ENCODE measurements at regions of chr17 and their contacts with region 1.

Region 1: DNA sequence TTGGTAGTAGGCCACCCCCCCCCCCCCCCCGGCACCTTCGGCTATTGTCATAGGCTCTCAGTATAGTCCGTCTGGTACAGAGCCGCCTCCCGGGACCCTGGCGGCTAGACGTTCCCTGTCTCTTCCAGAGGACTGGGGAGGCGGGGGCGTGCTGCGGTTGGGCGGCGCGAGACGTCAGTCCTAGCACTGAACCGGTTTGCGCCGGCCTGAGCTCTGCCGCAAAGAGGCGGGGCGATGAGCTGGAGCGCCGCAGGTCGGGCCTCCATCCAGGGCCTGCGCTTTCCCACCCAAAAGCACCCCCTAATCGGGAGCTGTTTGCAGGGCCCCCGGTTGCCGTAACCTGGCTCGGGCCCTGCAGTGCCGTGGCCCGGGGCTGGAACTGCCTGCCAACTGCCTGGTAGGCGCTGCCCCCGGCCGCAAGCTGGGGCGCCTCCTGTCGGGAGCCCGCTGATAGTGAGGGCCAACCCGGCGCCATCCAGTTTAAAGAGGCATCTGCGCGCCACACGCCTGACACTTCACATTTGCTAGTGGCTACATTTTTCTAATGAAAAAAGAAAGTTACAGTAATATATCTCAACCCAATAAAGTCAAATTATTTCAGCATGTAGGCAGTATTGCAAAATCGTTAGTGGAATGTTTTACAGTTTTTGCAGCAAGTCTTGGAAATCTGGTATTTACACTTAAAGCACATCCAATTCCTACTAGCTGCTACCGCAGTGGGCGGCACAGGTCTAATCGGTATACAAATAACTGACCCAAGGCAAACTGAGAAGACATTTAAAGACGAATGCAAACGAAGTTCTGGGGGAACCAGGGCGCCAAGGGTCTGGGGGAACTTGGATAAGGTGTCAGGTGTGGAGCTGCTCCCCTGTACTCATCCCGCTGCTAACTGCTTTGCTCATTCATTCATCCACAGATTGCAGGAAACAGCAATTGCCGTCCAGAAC is 748 bp upstream of the USP22 start:
- DNase-seq: peak; percentile 90 to 99 (median 95)
- ATAC-seq: peak; percentile 77
- H3K4me3 ChIP-seq: peak overlapping the region; percentile 55 to 66
- H3K4me3 Mint-ChIP-seq: peak overlapping the region; percentile 78
- H3K27ac ChIP-seq: peak overlapping the region; percentile 94 to 98
- H3K27ac Mint-ChIP-seq: peak overlapping the region; percentile 92
- H3K4me1 ChIP-seq: peaks cover 25% of the 10 kb centered on the region
- H3K4me1 Mint-ChIP-seq: peaks cover 31% of the 10 kb centered on the region
- H3K27me3 ChIP-seq: no peaks in the 10 kb centered on the region
- H3K27me3 Mint-ChIP-seq: no peaks in the 10 kb centered on the region
- CTCF ChIP-seq: peak; percentile 96

Region 2: GRCh38 chr17:20908373-20909273 is 134.9 kb before region 1 on chr17:
- CTCF ChIA-PET with region 1: no interaction called
- POLR2A ChIA-PET with region 1: no interaction called
- intact Hi-C with region 1: loop called (anchors 1 kb)
- DNase-seq: peak; percentile 49 to 87 (median 72)
- ATAC-seq: peak; percentile 99
- H3K4me3 ChIP-seq: peak overlapping the region; percentile 60
- H3K4me3 Mint-ChIP-seq: peak overlapping the region; percentile 80
- H3K27ac ChIP-seq: peak overlapping the region; percentile 35 to 39
- H3K27ac Mint-ChIP-seq: no peak overlapping the region
- H3K4me1 ChIP-seq: peaks cover 6% of the 10 kb centered on the region
- H3K4me1 Mint-ChIP-seq: peaks cover 8% of the 10 kb centered on the region
- H3K27me3 ChIP-seq: peaks cover 0 to 3% of the 10 kb centered on the region in 2 experiments
- H3K27me3 Mint-ChIP-seq: peaks cover 3% of the 10 kb centered on the region
- CTCF ChIP-seq: no peak

Region 3: GRCh38 chr17:20926532-20926931 is 117.0 kb before region 1 on chr17:
- CTCF ChIA-PET with region 1: no interaction called
- POLR2A ChIA-PET with region 1: no interaction called
- intact Hi-C with region 1: no loop called
- DNase-seq: no peak
- ATAC-seq: no peak
- H3K4me3 ChIP-seq: no peak overlapping the region
- H3K4me3 Mint-ChIP-seq: no peak overlapping the region
- H3K27ac ChIP-seq: no peak overlapping the region
- H3K27ac Mint-ChIP-seq: no peak overlapping the region
- H3K4me1 ChIP-seq: no peaks in the 10 kb centered on the region
- H3K4me1 Mint-ChIP-seq: no peaks in the 10 kb centered on the region
- H3K27me3 ChIP-seq: no peaks in the 10 kb centered on the region
- H3K27me3 Mint-ChIP-seq: no peaks in the 10 kb centered on the region
- CTCF ChIP-seq: no peak

Region 4: DNA sequence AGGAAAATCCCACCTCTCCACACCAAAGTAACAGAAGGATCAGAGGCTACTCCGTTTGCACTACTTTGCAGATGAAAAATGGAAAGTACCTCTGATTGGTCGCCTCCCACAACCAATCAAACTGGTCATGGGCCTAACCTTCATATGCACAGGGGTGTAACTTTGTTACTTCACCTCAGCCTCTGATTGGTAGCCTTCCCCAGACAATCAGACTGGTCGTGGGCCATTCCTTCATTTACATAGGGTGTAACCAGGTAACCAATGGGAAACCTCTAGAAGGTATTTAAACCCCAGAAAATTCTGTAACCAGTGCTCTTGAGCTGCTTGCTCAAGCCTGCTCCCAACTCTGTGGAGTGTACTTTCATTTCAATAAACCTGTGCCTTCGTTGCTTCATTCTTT is 38.4 kb after region 1 on chr17:
- CTCF ChIA-PET with region 1: no interaction called
- POLR2A ChIA-PET with region 1: no interaction called
- intact Hi-C with region 1: no loop called
- DNase-seq: no peak
- ATAC-seq: no peak
- H3K4me3 ChIP-seq: no peak overlapping the region
- H3K4me3 Mint-ChIP-seq: no peak overlapping the region
- H3K27ac ChIP-seq: no peak overlapping the region
- H3K27ac Mint-ChIP-seq: no peak overlapping the region
- H3K4me1 ChIP-seq: no peaks in the 10 kb centered on the region
- H3K4me1 Mint-ChIP-seq: no peaks in the 10 kb centered on the region
- H3K27me3 ChIP-seq: no peaks in the 10 kb centered on the region
- H3K27me3 Mint-ChIP-seq: peaks cover 5% of the 10 kb centered on the region
- CTCF ChIP-seq: no peak

Region 5: DNA sequence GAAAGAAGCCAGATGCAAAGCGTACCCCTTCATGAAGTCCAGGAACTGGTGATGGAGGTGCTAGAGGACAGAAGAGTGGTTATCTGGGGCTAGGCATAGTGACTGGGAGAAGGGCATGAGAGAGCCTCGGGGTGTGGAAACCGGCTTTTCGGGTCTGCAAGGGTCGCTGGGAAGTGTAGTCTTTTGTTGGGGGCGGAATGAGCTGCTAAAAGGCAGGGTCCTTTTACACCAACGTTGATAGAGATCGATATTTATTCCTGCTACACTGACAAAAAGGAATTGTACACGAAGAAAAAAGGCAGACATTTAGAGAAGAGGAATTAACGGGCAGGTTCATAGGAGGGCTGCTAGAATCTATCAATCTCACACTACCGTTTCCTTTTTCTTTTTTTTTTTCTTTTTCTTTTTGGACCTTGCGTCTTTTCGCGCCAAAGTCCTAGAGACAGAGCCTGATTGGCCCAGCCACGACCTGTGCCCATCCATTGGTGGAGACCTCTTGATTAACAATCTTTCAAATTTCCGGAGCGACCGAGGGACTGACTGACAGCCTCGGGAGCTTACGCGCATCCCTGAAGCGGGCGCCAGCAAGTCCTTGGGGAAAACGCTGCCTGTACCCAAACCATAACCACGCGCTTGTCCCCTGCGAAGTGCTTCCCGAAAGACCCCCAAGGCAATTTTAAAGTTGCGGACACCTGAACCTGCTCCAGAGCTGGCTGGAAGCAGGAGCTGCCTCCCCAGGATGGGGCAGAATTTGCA is 55.6 kb after region 1 on chr17:
- CTCF ChIA-PET with region 1: interaction called, 15 read pairs
- POLR2A ChIA-PET with region 1: no interaction called
- intact Hi-C with region 1: loop called (anchors 1 kb)
- DNase-seq: peak; percentile 22 to 85 (median 62)
- ATAC-seq: peak; percentile 97
- H3K4me3 ChIP-seq: peak overlapping the region; percentile 53 to 66
- H3K4me3 Mint-ChIP-seq: peak overlapping the region; percentile 93
- H3K27ac ChIP-seq: no peak overlapping the region
- H3K27ac Mint-ChIP-seq: no peak overlapping the region
- H3K4me1 ChIP-seq: peaks cover 12% of the 10 kb centered on the region
- H3K4me1 Mint-ChIP-seq: peaks cover 11% of the 10 kb centered on the region
- H3K27me3 ChIP-seq: no peaks in the 10 kb centered on the region
- H3K27me3 Mint-ChIP-seq: peaks cover 5% of the 10 kb centered on the region
- CTCF ChIP-seq: no peak

Region 6: GRCh38 chr17:21228104-21228503 is 184.5 kb after region 1 on chr17:
- CTCF ChIA-PET with region 1: no interaction called
- POLR2A ChIA-PET with region 1: no interaction called
- intact Hi-C with region 1: no loop called
- DNase-seq: no peak
- ATAC-seq: no peak
- H3K4me3 ChIP-seq: no peak overlapping the region
- H3K4me3 Mint-ChIP-seq: no peak overlapping the region
- H3K27ac ChIP-seq: no peak overlapping the region
- H3K27ac Mint-ChIP-seq: no peak overlapping the region
- H3K4me1 ChIP-seq: no peaks in the 10 kb centered on the region
- H3K4me1 Mint-ChIP-seq: no peaks in the 10 kb centered on the region
- H3K27me3 ChIP-seq: no peaks in the 10 kb centered on the region
- H3K27me3 Mint-ChIP-seq: no peaks in the 10 kb centered on the region
- CTCF ChIP-seq: no peak

Region 7: DNA sequence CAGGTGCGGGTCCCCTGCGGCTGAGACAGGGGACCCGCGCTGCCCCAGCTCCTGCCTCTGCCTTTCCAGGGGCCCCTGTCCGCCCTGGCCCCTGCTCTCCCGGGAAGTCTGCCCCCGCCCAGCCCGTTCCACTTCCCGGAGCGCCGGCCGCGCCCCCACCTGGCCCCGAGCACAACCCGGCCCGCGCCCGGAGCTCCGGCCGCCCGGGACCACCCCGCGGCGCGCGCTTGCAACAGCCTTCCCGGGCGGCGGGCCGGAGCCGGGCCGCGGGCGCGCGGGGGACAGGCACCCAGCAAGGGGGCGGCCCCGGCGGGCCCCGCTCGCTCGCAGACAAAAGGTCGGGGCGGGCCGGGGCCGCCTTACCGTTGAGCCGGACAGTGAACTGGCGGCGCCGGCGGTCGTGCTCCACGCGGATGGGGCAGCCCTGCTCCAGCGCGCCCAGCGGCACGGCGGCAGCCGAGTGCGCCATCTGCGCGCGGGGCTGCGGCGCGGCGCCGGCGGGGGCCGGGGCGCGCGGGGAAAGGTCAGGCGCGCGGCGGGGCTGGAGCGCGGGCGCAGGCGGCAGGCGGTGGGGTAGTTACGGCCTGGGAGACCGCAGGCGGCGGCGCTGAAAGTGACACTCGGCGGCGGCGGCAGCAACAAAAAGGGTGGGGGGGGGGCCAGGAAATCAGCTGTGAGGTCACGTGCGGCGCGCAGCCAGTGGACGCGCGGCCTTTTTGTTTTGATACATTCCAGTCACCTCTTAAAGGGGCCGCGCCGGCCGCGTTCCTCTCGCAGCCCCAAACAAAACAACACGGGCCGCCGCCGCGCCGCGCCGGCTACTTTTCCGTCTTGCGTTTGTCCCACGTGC is 209.5 kb after region 1 on chr17 and contains the start of gene NATD1:
- CTCF ChIA-PET with region 1: no interaction called
- POLR2A ChIA-PET with region 1: interaction called, 3 read pairs
- intact Hi-C with region 1: loop called in 1 of 2 experiments (anchors 1 kb)
- DNase-seq: peak; percentile 54 to 92 (median 80)
- ATAC-seq: peak; percentile 79
- H3K4me3 ChIP-seq: peak within 1 kb of the TSS; percentile 55 to 73
- H3K4me3 Mint-ChIP-seq: peak within 1 kb of the TSS; percentile 86
- H3K27ac ChIP-seq: peak within 1 kb of the TSS; percentile 62 to 64
- H3K27ac Mint-ChIP-seq: peak within 1 kb of the TSS; percentile 92
- H3K4me1 ChIP-seq: peaks cover 17% of the 10 kb centered on the region
- H3K4me1 Mint-ChIP-seq: peaks cover 34% of the 10 kb centered on the region
- H3K27me3 ChIP-seq: no peaks in the 10 kb centered on the region
- H3K27me3 Mint-ChIP-seq: no peaks in the 10 kb centered on the region
- CTCF ChIP-seq: no peak
- total RNA-seq, gene NATD1: 6.3 to 6.6 TPM

Region 8: DNA sequence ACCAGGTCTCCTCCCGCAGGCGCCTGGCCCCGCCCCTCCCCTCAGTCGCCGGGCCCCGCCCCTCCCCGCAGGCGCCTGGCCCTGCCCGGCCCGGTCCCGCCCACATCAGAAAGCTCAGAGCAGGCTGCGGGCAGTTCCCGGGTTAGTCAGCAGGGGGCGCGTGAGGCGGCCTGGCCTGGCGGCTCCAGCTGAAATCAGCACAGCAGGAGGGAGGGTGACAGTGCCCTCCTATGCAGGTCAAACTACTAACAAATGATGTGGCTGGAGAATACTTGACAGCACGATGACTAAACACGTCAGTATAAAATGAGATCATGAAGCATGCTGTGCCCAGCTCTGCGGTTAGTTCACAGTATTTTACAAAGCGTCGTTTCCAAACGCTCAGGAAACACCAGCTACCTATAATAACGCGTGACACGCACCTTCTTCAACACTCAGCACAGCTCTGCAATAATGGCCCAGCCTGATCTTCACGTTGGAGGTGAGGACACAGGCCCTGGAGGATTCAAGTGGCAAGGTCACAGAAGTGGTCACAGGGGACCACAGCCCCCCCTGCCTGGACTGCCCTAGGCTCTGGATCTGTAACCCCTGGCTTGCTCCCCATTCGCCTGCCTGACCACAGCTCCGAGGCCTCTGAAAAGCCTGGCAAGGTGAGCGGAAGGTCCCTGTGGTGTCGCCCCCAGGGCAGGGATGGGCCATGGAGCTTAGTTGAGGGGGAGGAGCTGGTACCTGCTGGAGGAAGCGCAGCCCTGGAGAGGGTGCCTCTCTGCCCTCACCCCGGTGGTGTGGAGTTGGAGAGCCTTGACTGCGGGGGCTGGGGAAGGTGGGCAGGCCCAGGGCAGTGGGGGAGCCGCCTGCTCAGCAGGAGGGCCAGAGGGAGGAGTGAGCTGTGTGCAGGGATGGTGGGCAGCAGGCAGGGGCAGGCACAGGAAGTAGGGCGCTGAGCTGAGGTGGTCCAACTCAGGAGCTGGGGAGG is 413.8 kb after region 1 on chr17:
- CTCF ChIA-PET with region 1: no interaction called
- POLR2A ChIA-PET with region 1: no interaction called
- intact Hi-C with region 1: loop called in 1 of 2 experiments (anchors 1 kb)
- DNase-seq: peak; percentile 81 to 97 (median 90)
- ATAC-seq: peak; percentile 91
- H3K4me3 ChIP-seq: no peak overlapping the region
- H3K4me3 Mint-ChIP-seq: peak overlapping the region; percentile 15
- H3K27ac ChIP-seq: no peak overlapping the region
- H3K27ac Mint-ChIP-seq: peak overlapping the region; percentile 86
- H3K4me1 ChIP-seq: peaks cover 20% of the 10 kb centered on the region
- H3K4me1 Mint-ChIP-seq: peaks cover 22% of the 10 kb centered on the region
- H3K27me3 ChIP-seq: no peaks in the 10 kb centered on the region
- H3K27me3 Mint-ChIP-seq: peaks cover 7% of the 10 kb centered on the region
- CTCF ChIP-seq: peak; percentile 86